MCF 10A (cell line): ENCODE measurements at regions of chr20 and their contacts with region 1.

Region 1: GRCh38 chr20:38196592-38196991 is 31.5 kb upstream of the TGM2 start:
- DNase-seq: peak; percentile 82
- H3K4me3 Mint-ChIP-seq: no peak overlapping the region
- H3K27ac Mint-ChIP-seq: peak overlapping the region; percentile 3
- H3K4me1 Mint-ChIP-seq: peaks cover 39% of the 10 kb centered on the region
- H3K27me3 Mint-ChIP-seq: no peaks in the 10 kb centered on the region
- CTCF ChIP-seq: no peak

Region 2: DNA sequence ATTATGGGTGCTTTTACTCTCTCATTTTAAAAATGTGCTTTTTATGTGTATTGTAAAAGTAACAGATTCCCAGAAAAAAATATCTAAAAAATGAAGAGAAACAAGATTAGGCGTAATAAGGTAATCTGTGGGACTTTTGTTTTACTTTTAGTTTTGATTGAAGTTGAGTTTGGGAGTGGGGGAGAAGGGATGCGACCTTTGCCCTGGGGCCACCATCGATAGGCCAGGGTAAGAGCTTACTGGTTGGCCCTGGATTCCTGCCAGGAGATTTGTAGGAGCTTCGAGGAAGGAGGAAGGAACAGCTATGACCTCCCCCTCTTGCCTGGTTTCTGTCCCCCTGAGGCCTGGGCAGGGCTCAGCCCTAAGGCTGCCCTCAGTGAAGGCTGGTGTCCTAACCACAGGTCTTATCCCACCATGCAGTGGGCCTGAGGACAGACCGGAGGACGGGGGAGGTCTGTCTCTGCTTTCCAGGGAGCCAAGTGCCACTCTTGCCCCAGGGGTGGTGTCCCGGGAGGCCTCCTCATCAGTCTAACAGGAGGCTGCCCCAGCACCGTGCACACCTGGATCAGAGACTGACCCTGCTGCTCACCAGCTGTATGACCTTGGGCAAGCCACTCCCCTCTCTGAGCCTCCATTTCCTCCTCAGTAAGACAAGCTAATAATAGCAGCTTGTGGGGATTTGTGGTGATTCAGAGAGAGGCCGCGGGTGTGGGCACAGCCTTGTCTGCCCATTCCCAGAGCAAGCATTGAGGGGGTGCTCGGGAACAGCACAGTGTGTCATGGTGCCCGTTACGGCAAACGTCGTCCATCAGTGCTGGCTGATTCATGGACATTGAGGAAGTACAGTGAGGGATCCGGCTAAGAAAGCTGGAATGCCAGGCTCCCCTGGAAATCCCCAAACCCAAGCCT is 52.7 kb before region 1 on chr20:
- CTCF ChIA-PET with region 1: no interaction called
- POLR2A ChIA-PET with region 1: interaction called, 20 read pairs
- intact Hi-C with region 1: no loop called
- DNase-seq: peak; percentile 97
- H3K4me3 Mint-ChIP-seq: peak overlapping the region; percentile 40
- H3K27ac Mint-ChIP-seq: peak overlapping the region; percentile 95
- H3K4me1 Mint-ChIP-seq: peaks cover 38% of the 10 kb centered on the region
- H3K27me3 Mint-ChIP-seq: no peaks in the 10 kb centered on the region
- CTCF ChIP-seq: no peak

Region 3: GRCh38 chr20:38210741-38211140 is 14.1 kb after region 1 on chr20:
- CTCF ChIA-PET with region 1: interaction called, 198 read pairs
- POLR2A ChIA-PET with region 1: interaction called, 6 read pairs
- intact Hi-C with region 1: no loop called
- DNase-seq: peak; percentile 57
- H3K4me3 Mint-ChIP-seq: no peak overlapping the region
- H3K27ac Mint-ChIP-seq: no peak overlapping the region
- H3K4me1 Mint-ChIP-seq: no peaks in the 10 kb centered on the region
- H3K27me3 Mint-ChIP-seq: no peaks in the 10 kb centered on the region
- CTCF ChIP-seq: no peak